Left lung (tissue), 14 donors: ENCODE measurements at regions of chrX and their contacts with region 1.

Region 1: DNA sequence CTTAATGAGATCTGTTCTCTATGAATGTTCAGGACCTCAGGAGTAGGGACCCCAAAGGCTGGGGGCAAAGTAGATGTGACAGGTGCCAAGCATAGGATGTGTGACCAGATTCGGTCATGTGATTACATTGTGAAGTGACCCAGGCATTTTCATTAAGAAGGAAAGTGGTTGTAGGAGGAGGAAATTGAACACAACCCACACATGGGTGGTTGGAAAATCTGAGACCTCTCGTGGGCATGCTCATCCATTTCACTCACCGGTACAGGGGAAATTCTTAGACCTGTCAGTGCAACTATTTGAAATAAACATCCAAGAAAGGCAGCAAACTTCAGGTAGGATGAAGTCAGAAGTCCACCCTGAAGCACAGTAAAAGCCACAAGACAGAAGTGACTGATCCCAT is 43.5 kb upstream of the CD99 start:
- DNase-seq: no peak
- ATAC-seq: no peak
- H3K4me3 ChIP-seq: no peak overlapping the region
- H3K27ac ChIP-seq: no peak overlapping the region
- H3K4me1 ChIP-seq: no peaks in the 10 kb centered on the region
- H3K27me3 ChIP-seq: no peaks in the 10 kb centered on the region
- CTCF ChIP-seq: no peak

Region 2: DNA sequence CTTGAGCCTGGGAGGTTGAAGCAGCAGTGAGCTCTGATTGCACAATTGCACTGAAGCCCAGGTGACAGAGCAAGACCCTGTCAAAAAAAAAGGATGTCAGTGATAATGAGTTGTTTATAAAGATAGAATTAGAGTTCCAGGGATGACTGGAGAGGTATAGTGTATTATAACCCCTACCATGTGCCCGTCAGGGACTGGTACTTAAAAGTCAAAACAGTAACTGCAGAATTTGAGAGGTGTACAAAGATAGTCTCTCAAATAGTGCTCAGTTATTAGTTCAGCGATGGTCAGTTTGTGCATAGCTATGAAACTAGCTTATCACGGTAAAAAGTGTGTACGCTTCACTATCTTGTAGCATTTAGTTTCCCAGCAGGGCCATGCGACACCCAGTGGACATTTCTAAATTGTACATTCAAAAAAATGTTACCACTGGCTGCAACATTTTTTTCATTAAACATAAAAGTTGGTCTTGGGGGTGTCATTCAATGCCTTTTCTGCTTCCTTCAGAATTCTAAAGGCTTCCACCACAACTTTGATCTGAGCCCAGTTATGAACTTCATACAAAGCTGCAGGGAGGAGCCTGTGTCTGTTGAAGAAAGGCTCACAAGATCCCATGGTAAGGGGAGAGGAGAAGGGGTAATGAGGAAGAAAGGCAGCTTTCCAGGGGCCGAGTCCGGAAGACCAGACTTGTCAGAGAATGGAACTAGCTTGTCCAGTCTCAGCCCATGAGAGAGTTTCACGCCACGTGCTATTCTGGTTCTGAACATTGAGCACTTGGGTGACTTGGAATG is 171.9 kb after region 1 on chrX:
- intact Hi-C with region 1: loop called in 1 of 2 experiments (anchors 5 kb)
- DNase-seq: no peak
- ATAC-seq: peak; percentile 80
- H3K4me3 ChIP-seq: no peak overlapping the region
- H3K27ac ChIP-seq: no peak overlapping the region
- H3K4me1 ChIP-seq: no peaks in the 10 kb centered on the region
- H3K27me3 ChIP-seq: no peaks in the 10 kb centered on the region
- CTCF ChIP-seq: peak in 1 of 2 donors; percentile 56